Esophagus muscularis mucosa (tissue), 4 donors: ENCODE measurements at regions of chr19 and their contacts with region 1.

Region 1: GRCh38 chr19:47035127-47036096 is 13.0 kb downstream of the TMEM160 start:
- DNase-seq: peak; percentile 96
- H3K4me3 ChIP-seq: peak overlapping the region; percentile 50 to 61 (median 50)
- H3K27ac ChIP-seq: peak overlapping the region; percentile 6 to 58 (median 54)
- H3K4me1 ChIP-seq: peaks cover 7 to 16% (median 15%) of the 10 kb centered on the region in 4 donors
- H3K27me3 ChIP-seq: peaks cover 0 to 43% (median 5%) of the 10 kb centered on the region in 4 donors
- CTCF ChIP-seq: peak; percentile 98 to 99 (median 99)
- EP300 ChIP-seq: no peak
- POLR2A ChIP-seq: no peak

Region 2: GRCh38 chr19:46624958-46625661 is 410.3 kb before region 1 on chr19 and contains the start of gene PTGIR:
- intact Hi-C with region 1: no loop called
- DNase-seq: peak; percentile 95
- H3K4me3 ChIP-seq: peak within 1 kb of the TSS; percentile 19 to 48 (median 28)
- H3K27ac ChIP-seq: peak within 1 kb of the TSS; percentile 71 to 85 (median 80)
- H3K4me1 ChIP-seq: peaks cover 31 to 70% (median 65%) of the 10 kb centered on the region in 4 donors
- H3K27me3 ChIP-seq: no peaks in the 10 kb centered on the region
- CTCF ChIP-seq: no peak
- EP300 ChIP-seq: peak; percentile 32
- POLR2A ChIP-seq: no peak
- total RNA-seq, gene PTGIR: 5.9 to 9.1 (median 7.1) TPM

Region 3: GRCh38 chr19:47124937-47125668 is 89.7 kb after region 1 on chr19:
- intact Hi-C with region 1: loop called (anchors 5 kb)
- DNase-seq: no peak
- H3K4me3 ChIP-seq: no peak overlapping the region
- H3K27ac ChIP-seq: peak overlapping the region; percentile 37 to 76 (median 55)
- H3K4me1 ChIP-seq: peaks cover 4 to 30% (median 26%) of the 10 kb centered on the region in 4 donors
- H3K27me3 ChIP-seq: no peaks in the 10 kb centered on the region
- CTCF ChIP-seq: peak; percentile 70 to 87 (median 80)
- EP300 ChIP-seq: no peak
- POLR2A ChIP-seq: no peak